K562 (cell line): ENCODE measurements at regions of chr7 and their contacts with region 1.

Region 1: DNA sequence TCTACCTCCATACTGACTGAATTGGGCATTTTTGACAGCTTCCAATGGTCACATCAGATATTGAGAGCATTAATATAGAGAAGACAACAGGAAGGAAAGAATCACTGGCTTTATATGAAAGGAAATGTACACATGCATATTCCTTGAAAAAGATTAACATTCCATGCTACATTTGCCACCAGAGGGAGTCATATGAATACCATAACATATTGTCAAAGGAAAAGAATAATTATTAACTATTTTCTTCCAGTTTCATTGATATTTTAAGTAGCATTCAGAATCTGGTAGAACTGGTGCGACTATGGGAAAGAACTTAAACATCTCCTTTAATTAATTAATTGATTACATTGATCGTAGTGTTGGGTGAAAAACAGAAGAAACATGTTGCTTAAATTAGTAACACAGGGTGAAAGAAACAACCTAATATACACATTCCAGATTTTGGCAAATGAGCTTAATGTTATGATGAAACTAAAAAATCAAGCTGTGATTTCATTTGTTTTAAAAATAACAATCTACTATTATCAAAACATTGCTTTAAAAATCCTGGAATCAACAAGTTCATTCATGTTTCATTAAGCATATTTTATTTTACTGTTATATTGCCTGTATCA is 71.5 kb downstream of the GPR85 start:
- DNase-seq: peak in 2 of 4 experiments; percentile 20 to 52
- ATAC-seq: peak; percentile 65
- H3K4me3 ChIP-seq: no peak overlapping the region
- H3K27ac ChIP-seq: no peak overlapping the region
- H3K4me1 ChIP-seq: peaks cover 0 to 3% of the 10 kb centered on the region in 2 experiments; a peak in 1 of 5 replicates
- H3K27me3 ChIP-seq: no peaks in the 10 kb centered on the region
- CTCF ChIP-seq: peak; percentile 36 to 80 (median 48); a peak in 4 of 6 replicates
- EP300 ChIP-seq: no peak
- POLR2A ChIP-seq: no peak
- RAD21 ChIP-seq: peak; percentile 93 to 94

Region 2: GRCh38 chr7:113118074-113118959 is 103.2 kb after region 1 on chr7 and contains the start of gene SMIM30:
- CTCF ChIA-PET with region 1: interaction called, 12 read pairs
- POLR2A ChIA-PET with region 1: no interaction called
- in situ Hi-C with region 1: no loop called
- intact Hi-C with region 1: loop called (anchors 1 kb)
- DNase-seq: peak; percentile 89 to 99 (median 93)
- ATAC-seq: peak; percentile 99
- H3K4me3 ChIP-seq: peak within 1 kb of the TSS; percentile 59
- H3K27ac ChIP-seq: peak within 1 kb of the TSS; percentile 75
- H3K4me1 ChIP-seq: peaks cover 0 to 23% of the 10 kb centered on the region in 2 experiments; a peak in 3 of 5 replicates
- H3K27me3 ChIP-seq: no peaks in the 10 kb centered on the region
- CTCF ChIP-seq: peak in 2 of 3 experiments; percentile 10 to 18; a peak in 1 of 6 replicates
- EP300 ChIP-seq: peak; percentile 22; the same call in 1 of the 2 replicates
- POLR2A ChIP-seq: peak; percentile 96
- RAD21 ChIP-seq: no peak; a peak in 1 of 4 replicates
- polyA plus RNA-seq, gene SMIM30: 675 to 891 TPM

Region 3: GRCh38 chr7:113159746-113160339 is 144.7 kb after region 1 on chr7:
- CTCF ChIA-PET with region 1: no interaction called
- POLR2A ChIA-PET with region 1: no interaction called
- in situ Hi-C with region 1: no loop called
- intact Hi-C with region 1: loop called (anchors 2 kb)
- DNase-seq: peak; percentile 57 to 75 (median 66)
- ATAC-seq: peak; percentile 94
- H3K4me3 ChIP-seq: no peak overlapping the region
- H3K27ac ChIP-seq: no peak overlapping the region
- H3K4me1 ChIP-seq: no peaks in the 10 kb centered on the region
- H3K27me3 ChIP-seq: no peaks in the 10 kb centered on the region
- CTCF ChIP-seq: peak; percentile 71 to 87 (median 80)
- EP300 ChIP-seq: no peak
- POLR2A ChIP-seq: no peak
- RAD21 ChIP-seq: peak; percentile 64 to 68

Region 4: DNA sequence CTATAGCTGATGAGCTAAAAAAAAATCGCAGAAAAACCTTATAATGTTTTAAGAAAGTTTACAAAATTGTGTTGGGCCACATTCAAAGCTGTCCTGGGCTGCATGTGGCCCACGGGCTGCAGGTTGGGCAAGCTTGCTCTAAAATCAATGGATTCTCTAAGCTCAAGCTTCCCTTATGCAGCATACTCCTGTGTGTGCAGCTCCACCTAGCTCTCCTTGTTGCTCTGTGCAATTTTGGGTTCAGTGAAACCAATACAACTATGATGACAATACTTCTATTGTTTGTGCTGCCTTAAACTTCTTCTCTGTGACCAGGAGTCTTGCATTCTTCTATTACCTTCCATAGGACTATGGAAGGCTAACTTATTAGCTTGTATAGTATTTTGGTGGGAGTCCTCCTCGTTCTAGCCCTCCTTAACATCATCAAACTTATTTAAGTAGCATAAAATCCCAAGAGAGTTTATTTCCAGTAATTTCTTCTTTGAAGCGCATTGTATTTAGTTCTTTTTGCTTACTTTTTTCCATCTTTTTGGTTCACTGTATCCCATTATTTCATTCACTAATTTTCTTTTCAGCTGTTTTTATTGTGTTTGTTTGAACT is 274.1 kb after region 1 on chr7:
- CTCF ChIA-PET with region 1: interaction called, 5 read pairs
- POLR2A ChIA-PET with region 1: no interaction called
- in situ Hi-C with region 1: loop called (anchors 10 kb)
- intact Hi-C with region 1: loop called (anchors 1 kb)
- DNase-seq: peak in 2 of 4 experiments; percentile 21 to 62
- ATAC-seq: peak; percentile 96
- H3K4me3 ChIP-seq: no peak overlapping the region
- H3K27ac ChIP-seq: no peak overlapping the region
- H3K4me1 ChIP-seq: peaks cover 0 to 6% of the 10 kb centered on the region in 2 experiments; a peak in 1 of 5 replicates
- H3K27me3 ChIP-seq: no peaks in the 10 kb centered on the region; a peak in 1 of 5 replicates
- CTCF ChIP-seq: peak; percentile 74 to 89 (median 75)
- EP300 ChIP-seq: no peak
- POLR2A ChIP-seq: no peak
- RAD21 ChIP-seq: peak; percentile 84 to 86

Region 5: GRCh38 chr7:113421696-113422330 is 406.7 kb after region 1 on chr7:
- CTCF ChIA-PET with region 1: interaction called, 22 read pairs
- POLR2A ChIA-PET with region 1: no interaction called
- in situ Hi-C with region 1: loop called (anchors 25 kb)
- intact Hi-C with region 1: loop called (anchors 1 kb)
- DNase-seq: peak; percentile 78 to 93 (median 80)
- ATAC-seq: peak; percentile 100
- H3K4me3 ChIP-seq: no peak overlapping the region
- H3K27ac ChIP-seq: no peak overlapping the region
- H3K4me1 ChIP-seq: no peaks in the 10 kb centered on the region
- H3K27me3 ChIP-seq: no peaks in the 10 kb centered on the region
- CTCF ChIP-seq: peak; percentile 95 to 99 (median 99)
- EP300 ChIP-seq: no peak
- POLR2A ChIP-seq: no peak
- RAD21 ChIP-seq: peak; percentile 94 to 95

Region 6: DNA sequence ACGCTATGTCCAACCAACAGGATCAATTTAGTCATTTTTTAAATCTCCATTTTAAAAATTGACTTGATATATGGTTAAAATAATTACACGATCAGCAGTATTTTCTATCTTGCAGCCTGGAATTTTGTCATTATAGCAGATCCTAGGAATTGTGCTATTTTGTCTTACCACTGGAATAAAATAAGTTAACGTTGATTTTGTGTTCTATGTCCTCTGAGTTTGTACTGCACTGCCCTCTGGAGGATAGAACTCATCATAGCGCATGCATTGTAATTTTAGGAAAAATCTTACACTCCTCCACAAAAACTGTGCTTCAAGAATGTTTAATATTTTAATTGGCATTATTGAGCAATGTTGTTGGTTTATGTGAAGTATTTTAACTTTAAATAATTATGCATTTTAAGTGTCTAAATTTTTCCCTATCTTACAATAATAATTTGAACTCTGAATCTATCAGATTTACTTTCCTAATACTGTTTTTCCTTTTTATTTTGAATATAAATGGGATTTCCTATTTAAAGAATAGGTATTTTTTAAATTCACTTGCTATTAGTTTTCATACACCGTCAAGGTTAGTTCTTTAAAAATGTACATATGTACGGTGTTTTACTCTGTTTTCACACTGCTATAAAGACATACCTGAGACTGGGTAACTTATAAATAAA is 683.5 kb after region 1 on chr7:
- CTCF ChIA-PET with region 1: no interaction called
- POLR2A ChIA-PET with region 1: no interaction called
- in situ Hi-C with region 1: loop called (anchors 25 kb)
- intact Hi-C with region 1: loop called (anchors 1 kb)
- DNase-seq: peak; percentile 9 to 40 (median 20)
- ATAC-seq: no peak
- H3K4me3 ChIP-seq: no peak overlapping the region
- H3K27ac ChIP-seq: no peak overlapping the region
- H3K4me1 ChIP-seq: no peaks in the 10 kb centered on the region
- H3K27me3 ChIP-seq: no peaks in the 10 kb centered on the region
- CTCF ChIP-seq: peak; percentile 32 to 69 (median 60); a peak in 5 of 6 replicates
- EP300 ChIP-seq: no peak
- POLR2A ChIP-seq: no peak
- RAD21 ChIP-seq: peak; percentile 69 to 82

Region 7: DNA sequence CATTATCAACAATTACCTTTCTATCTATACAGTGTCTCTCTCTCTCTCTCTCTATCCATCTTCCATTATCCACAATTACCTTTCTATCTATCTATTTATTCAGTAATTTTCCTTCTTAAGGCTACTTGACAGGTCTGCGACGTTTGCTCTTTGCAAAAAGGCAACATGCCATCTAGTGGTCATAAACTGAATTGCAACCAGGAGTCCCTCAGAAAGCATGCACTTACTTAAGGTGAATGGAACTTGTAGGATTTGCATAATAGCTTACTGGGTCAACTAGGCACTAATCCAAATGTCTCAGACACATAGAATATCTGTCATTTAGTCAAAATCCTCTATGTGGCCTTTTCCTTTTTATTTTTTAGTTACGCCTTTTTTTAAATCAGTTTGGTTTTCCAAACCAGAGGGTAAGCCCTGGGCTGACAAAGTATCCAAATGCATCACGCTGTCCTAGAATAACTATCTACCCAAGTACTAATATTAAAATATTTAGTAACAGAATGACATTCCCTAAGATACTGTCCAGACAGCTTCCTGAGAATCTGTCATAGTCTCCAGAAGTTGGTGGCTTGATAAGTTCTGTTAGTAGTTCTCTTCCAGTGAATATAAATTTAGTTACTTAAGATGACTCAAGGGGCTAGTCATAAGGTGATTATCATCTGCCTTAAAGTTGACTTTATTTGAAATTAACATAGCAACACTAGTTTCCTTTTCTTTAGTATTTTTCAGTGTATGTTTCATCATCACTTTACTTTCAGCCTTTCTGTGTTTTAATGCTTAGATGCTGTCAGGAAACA is 695.4 kb after region 1 on chr7:
- CTCF ChIA-PET with region 1: no interaction called
- POLR2A ChIA-PET with region 1: no interaction called
- in situ Hi-C with region 1: loop called (anchors 25 kb)
- intact Hi-C with region 1: no loop called
- DNase-seq: peak; percentile 59 to 87 (median 75)
- ATAC-seq: peak; percentile 90
- H3K4me3 ChIP-seq: no peak overlapping the region
- H3K27ac ChIP-seq: no peak overlapping the region
- H3K4me1 ChIP-seq: no peaks in the 10 kb centered on the region
- H3K27me3 ChIP-seq: no peaks in the 10 kb centered on the region
- CTCF ChIP-seq: peak; percentile 70 to 92 (median 88)
- EP300 ChIP-seq: peak; percentile 3; the same call in 1 of the 2 replicates
- POLR2A ChIP-seq: no peak
- RAD21 ChIP-seq: peak; percentile 53 to 70